ENCODE measurements at regions of chr15 and their contacts with region 1.

Region 1: GRCh38 chr15:68672781-68673205 is 94.0 kb downstream of the CORO2B start:
- DNase-seq: no peak
- H3K4me3 ChIP-seq: no peak overlapping the region
- H3K27ac ChIP-seq: no peak overlapping the region
- H3K27me3 ChIP-seq: no peaks in the 10 kb centered on the region
- CTCF ChIP-seq: peak; percentile 42; the same call in 1 of the 2 replicates

Region 2: DNA sequence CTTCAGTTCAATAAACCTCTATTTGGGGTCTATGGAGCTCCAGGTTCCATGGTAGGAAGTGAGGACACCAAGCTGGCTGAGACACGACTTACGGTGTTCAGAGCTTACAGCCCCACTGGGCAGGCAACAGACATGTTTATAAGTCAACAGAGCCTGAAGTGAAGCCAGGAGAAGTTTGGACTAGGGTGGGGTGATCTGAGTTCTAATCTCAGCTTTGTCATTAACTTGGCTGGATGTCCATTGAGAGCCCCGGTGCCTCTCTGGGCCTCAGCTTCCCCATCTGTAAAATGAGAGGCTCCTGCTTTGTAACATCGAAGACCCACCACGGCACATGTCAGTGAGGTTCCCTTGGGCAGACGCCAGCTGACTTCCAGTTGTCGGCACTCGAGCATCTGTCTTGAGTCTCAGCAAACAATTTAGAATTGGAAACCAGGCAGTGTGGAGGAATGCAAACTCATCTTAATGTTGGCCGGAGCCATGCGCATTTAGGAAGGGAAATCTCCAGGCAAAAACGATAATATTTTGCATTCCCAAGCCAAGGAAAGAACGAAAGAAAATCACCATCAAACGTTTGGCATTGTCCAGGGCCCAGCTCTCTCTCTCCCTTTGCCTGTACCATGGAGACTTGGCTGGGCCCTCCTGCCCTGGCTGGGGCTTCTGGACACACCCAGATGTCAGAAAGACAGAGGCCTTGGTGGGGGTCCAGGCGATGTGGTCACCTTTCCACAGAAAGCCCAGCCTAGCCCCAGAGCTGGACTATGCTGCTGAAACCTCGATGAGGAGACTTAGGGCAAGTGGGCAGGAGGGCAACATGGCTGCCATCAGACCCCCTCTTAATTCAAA is 259.2 kb before region 1 on chr15:
- CTCF ChIA-PET with region 1: interaction called, 11 read pairs
- POLR2A ChIA-PET with region 1: no interaction called
- DNase-seq: no peak
- H3K4me3 ChIP-seq: no peak overlapping the region
- H3K27ac ChIP-seq: no peak overlapping the region
- H3K27me3 ChIP-seq: no peaks in the 10 kb centered on the region
- CTCF ChIP-seq: no peak

Region 3: DNA sequence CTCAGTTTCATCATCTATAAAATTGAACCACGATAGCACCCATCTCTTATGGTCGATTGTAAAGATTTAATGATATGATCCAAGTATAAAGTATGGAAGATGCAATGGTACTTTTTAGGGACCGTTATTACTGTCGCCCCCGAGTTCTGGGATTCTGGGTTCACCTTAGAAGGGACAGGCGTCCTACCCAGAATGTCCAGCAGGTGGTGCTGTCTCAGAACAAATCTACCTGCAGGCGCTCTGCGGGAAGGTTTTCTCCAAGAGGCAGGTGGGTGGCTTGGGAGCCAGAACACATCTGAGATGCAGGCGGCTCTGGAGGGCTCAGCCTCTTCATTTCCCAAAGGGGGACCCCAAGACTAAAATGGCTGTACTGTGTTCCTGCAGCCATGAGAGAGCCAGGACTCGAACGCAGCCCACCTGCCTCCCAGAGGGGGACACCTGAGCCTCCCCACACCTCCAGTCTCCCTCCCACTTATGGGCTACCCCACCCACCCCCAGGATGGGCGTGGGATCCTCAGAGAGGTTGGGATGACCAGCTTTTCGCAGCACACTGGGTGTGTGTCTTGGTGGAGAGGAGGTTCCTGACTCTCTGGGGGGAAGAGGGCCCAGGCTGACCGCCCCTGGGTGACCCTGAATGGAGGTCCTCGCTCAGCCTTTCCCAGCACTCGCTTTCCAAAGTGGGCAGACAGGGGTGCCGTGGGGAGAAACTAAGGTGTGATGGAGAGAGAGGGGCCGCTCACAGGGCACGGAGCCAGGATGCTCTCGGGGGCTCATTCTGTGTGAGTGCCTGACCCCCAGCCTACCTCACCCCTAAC is 122.1 kb before region 1 on chr15:
- CTCF ChIA-PET with region 1: interaction called, 138 read pairs
- POLR2A ChIA-PET with region 1: no interaction called
- DNase-seq: no peak
- H3K4me3 ChIP-seq: no peak overlapping the region
- H3K27ac ChIP-seq: no peak overlapping the region
- H3K27me3 ChIP-seq: peaks cover 8% of the 10 kb centered on the region
- CTCF ChIP-seq: peak; percentile 90

Region 4: GRCh38 chr15:68578174-68578979 is 94.4 kb before region 1 on chr15:
- CTCF ChIA-PET with region 1: interaction called, 13 read pairs
- POLR2A ChIA-PET with region 1: interaction called, 3 read pairs
- DNase-seq: no peak
- H3K4me3 ChIP-seq: peak overlapping the region; percentile 70
- H3K27ac ChIP-seq: no peak overlapping the region
- H3K27me3 ChIP-seq: peaks cover 10% of the 10 kb centered on the region
- CTCF ChIP-seq: peak; percentile 55

Region 5: DNA sequence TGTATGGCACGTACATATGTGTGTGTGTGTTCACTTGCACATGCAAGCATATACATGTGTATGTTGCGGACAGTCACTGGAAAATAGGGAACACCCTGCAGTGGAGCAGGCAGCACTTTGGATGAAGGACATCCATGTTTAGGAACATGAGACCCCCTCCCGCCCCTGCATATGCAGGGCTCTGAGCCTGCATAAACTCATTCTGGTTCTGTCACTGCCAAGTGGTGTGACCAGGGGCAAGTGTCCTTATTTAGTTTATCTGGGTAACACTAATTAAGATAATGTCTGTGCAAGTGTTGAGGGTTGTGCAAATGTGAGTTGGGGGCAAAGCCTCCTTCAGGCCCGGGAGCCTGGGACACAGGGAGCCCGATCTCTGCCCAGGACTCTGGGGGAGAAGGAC is 11.7 kb after region 1 on chr15:
- CTCF ChIA-PET with region 1: interaction called, 19 read pairs
- POLR2A ChIA-PET with region 1: no interaction called
- DNase-seq: no peak
- H3K4me3 ChIP-seq: no peak overlapping the region
- H3K27ac ChIP-seq: no peak overlapping the region
- H3K27me3 ChIP-seq: no peaks in the 10 kb centered on the region
- CTCF ChIP-seq: no peak

Region 6: DNA sequence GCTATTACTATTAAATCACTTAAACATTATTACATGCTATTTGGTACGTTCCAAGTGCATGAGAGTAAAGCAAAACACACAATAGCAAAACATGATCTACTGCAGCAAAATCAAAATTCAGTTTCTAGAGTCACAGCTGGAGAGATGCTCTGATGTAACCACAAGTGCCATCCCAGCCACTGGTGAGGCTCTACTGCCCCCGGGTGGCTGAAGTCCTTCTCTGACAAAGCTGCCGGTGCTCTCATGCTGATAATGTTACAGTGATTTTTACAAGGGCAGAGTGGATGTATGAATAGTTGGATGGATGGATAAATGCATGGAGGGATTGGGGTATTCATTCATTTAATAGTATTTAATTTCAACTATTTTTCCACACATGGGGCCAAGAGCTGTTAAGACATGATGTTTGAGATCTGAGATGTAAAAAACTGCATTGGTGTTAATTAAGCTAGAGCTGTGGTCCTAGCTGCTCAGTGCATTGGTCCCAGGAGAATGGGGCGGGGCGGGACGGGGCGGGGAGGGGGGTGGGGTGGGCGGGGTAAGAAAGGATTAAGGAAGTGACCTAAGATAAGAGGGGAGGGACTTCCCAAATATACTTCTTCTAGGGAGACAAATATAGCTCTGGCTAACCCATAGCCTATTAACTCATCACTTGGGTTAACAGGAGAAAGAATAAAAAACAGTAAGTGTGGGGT is 252.2 kb after region 1 on chr15:
- CTCF ChIA-PET with region 1: interaction called, 17 read pairs
- POLR2A ChIA-PET with region 1: no interaction called
- DNase-seq: peak; percentile 29
- H3K4me3 ChIP-seq: no peak overlapping the region
- H3K27ac ChIP-seq: no peak overlapping the region
- H3K27me3 ChIP-seq: peaks cover 9% of the 10 kb centered on the region
- CTCF ChIP-seq: peak; percentile 94

Measured in AG04450 (cell line).